ENCODE measurements at regions of chr15 and their contacts with region 1.

Region 1: GRCh38 chr15:57561041-57561711 is 30.5 kb upstream of the MYZAP start:
- DNase-seq: peak; percentile 52 to 70
- ATAC-seq: peak; percentile 87 to 96
- H3K4me3 ChIP-seq: no peak overlapping the region
- H3K27ac ChIP-seq: peak overlapping the region in 3 of 4 donors; percentile 38 to 47 (median 41)
- H3K4me1 ChIP-seq: no peaks in the 10 kb centered on the region
- H3K27me3 ChIP-seq: no peaks in the 10 kb centered on the region
- CTCF ChIP-seq: peak; percentile 85 to 93 (median 90)
- POLR2A ChIP-seq: no peak

Region 2: GRCh38 chr15:57611938-57612337 is 50.8 kb after region 1 on chr15:
- in situ Hi-C with region 1: loop called in 1 of 4 experiments (anchors 5 kb)
- intact Hi-C with region 1: loop called (anchors 1 kb)
- DNase-seq: peak; percentile 30 to 52
- ATAC-seq: peak; percentile 58 to 72
- H3K4me3 ChIP-seq: no peak overlapping the region
- H3K27ac ChIP-seq: peak overlapping the region in 2 of 4 donors; percentile 27 to 55
- H3K4me1 ChIP-seq: peaks cover 17 to 35% of the 10 kb centered on the region in 2 donors
- H3K27me3 ChIP-seq: no peaks in the 10 kb centered on the region
- CTCF ChIP-seq: peak in 4 of 5 experiments; percentile 13 to 47 (median 36)
- POLR2A ChIP-seq: no peak

Region 3: DNA sequence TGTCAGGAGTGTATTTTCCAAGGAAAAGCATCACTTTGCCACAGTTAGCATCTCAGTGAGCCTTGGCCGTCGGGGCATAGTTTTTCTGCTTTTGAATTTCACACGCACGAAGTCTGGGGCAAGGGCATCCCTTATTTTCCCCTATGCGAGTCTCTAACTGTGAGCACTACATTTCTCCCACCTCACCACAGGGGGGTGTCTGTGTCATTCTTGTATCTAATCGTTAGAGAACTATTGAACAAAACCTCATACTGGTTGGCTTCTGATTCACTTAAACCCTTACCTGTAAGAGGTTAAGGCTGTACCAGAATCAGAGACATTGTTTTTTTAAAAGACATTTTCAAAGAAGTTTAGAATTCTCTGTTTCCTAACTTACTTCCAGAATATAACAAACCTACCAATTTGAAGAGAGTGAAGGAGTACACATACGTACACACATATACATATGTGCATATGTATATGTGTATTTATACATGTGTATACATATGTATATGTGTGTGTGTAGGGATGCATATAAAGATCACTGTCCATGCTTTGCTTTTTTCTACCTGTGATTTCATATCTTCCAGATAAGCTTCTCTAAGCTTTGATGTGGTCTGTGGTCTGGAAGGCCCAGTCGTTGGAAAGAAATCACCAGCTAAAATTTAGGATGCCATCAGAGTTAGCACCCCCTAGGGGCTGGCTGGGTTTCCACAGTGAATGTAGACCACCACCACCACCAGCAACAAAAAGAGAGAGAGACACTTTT is 79.9 kb after region 1 on chr15:
- in situ Hi-C with region 1: loop called in 1 of 4 experiments (anchors 10 kb)
- intact Hi-C with region 1: loop called (anchors 5 kb)
- DNase-seq: no peak
- ATAC-seq: peak; percentile 55 to 68
- H3K4me3 ChIP-seq: no peak overlapping the region
- H3K27ac ChIP-seq: no peak overlapping the region
- H3K4me1 ChIP-seq: peaks cover under 1 to 10% of the 10 kb centered on the region in 2 donors
- H3K27me3 ChIP-seq: no peaks in the 10 kb centered on the region
- CTCF ChIP-seq: peak in 4 of 5 experiments; percentile 22 to 43 (median 30)
- POLR2A ChIP-seq: no peak

Region 4: GRCh38 chr15:57667171-57667849 is 106.1 kb after region 1 on chr15:
- in situ Hi-C with region 1: loop called in 1 of 4 experiments (anchors 25 kb)
- intact Hi-C with region 1: no loop called
- DNase-seq: no peak
- ATAC-seq: peak in 1 of 2 donors; percentile 39
- H3K4me3 ChIP-seq: no peak overlapping the region
- H3K27ac ChIP-seq: no peak overlapping the region
- H3K4me1 ChIP-seq: no peaks in the 10 kb centered on the region
- H3K27me3 ChIP-seq: no peaks in the 10 kb centered on the region
- CTCF ChIP-seq: peak in 3 of 5 experiments; percentile 21 to 37 (median 27)
- POLR2A ChIP-seq: no peak

Region 5: DNA sequence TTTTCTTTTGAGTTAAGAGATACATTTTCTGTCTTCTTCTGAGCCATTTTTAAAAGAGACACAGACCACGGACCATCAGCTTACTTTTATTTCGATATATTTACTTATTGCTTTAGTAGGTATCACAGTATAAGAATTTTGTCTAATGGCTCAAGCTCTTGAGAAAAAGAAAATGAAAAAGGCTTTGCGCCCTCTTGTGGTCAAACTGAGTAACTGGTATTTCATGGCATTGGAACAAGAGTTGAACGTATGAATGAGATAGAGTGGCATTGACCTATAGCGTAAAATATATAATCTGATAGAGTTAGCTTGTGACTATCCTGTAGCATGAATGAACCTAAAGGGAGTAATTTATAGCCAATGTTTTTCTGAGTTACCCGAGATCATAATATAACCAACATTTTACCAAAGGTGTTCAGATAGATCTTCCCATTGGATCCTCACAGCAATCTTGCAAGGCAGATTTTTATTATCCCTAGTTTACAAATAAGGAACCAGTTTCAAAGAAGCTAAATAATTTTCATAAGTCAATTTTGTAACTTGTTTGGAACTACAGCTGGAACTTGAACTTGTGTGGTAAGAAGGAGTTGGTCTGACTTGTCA is 300.0 kb after region 1 on chr15:
- in situ Hi-C with region 1: loop called (anchors 10 to 25 kb)
- intact Hi-C with region 1: loop called (anchors 2 kb)
- DNase-seq: no peak
- ATAC-seq: peak in 1 of 2 donors; percentile 29
- H3K4me3 ChIP-seq: no peak overlapping the region
- H3K27ac ChIP-seq: no peak overlapping the region
- H3K4me1 ChIP-seq: no peaks in the 10 kb centered on the region
- H3K27me3 ChIP-seq: no peaks in the 10 kb centered on the region
- CTCF ChIP-seq: peak; percentile 61 to 82 (median 81)
- POLR2A ChIP-seq: no peak

Region 6: DNA sequence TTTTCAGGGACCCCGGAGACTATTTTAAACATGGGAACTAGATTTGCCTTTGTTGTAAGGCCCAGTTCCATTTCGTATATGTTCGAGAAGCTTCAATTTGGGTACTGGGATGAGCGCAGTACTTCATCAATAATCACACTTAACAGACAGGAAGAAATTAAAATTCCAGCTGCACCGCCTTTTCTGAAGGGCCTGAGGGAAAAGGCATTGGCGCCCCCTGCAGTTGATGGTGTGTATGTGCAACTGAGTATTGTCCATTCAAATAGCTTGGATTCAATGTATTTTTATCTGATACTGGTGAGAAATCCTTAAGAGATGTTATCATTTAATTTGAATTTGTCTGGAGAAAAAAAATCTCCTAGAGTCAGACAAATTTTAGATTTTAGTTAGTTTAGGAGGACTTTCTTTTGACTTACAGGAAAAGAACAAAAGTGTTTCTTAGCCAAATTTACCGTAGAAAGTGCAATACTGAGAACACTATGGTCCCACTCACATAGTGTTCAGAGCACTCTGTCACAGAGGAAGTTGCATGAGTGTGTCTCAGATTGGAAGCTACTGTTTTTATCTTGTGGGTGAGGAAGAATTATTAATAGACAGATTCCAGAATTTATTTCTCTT is 509.7 kb after region 1 on chr15:
- in situ Hi-C with region 1: loop called in 1 of 4 experiments (anchors 25 kb)
- intact Hi-C with region 1: loop called (anchors 10 kb)
- DNase-seq: peak; percentile 13 to 14
- ATAC-seq: no peak
- H3K4me3 ChIP-seq: no peak overlapping the region
- H3K27ac ChIP-seq: no peak overlapping the region
- H3K4me1 ChIP-seq: peaks cover 0 to 6% of the 10 kb centered on the region in 2 donors
- H3K27me3 ChIP-seq: peaks cover 8 to 13% (median 9%) of the 10 kb centered on the region in 3 donors
- CTCF ChIP-seq: peak; percentile 40 to 78 (median 56)
- POLR2A ChIP-seq: no peak